ENCODE measurements at regions of chr20 and their contacts with region 1.

Region 1: GRCh38 chr20:64119681-64120341 is 12.4 kb upstream of the NPBWR2 start:
- DNase-seq: no peak
- H3K4me3 Mint-ChIP-seq: peak overlapping the region; percentile 77
- H3K27ac Mint-ChIP-seq: peak overlapping the region; percentile 80
- H3K4me1 Mint-ChIP-seq: peaks cover 9% of the 10 kb centered on the region
- H3K27me3 Mint-ChIP-seq: peaks cover 14% of the 10 kb centered on the region

Region 2: GRCh38 chr20:63903796-63904561 is 215.8 kb before region 1 on chr20:
- intact Hi-C with region 1: loop called (anchors 5 kb)
- DNase-seq: no peak
- H3K4me3 Mint-ChIP-seq: no peak overlapping the region
- H3K27ac Mint-ChIP-seq: peak overlapping the region; percentile 47
- H3K4me1 Mint-ChIP-seq: peaks cover 33% of the 10 kb centered on the region
- H3K27me3 Mint-ChIP-seq: no peaks in the 10 kb centered on the region

Region 3: GRCh38 chr20:64038565-64039292 is 81.1 kb before region 1 on chr20:
- intact Hi-C with region 1: loop called (anchors 1 kb)
- DNase-seq: peak; percentile 95
- H3K4me3 Mint-ChIP-seq: peak overlapping the region; percentile 79
- H3K27ac Mint-ChIP-seq: peak overlapping the region; percentile 80
- H3K4me1 Mint-ChIP-seq: peaks cover 48% of the 10 kb centered on the region
- H3K27me3 Mint-ChIP-seq: no peaks in the 10 kb centered on the region

Region 4: DNA sequence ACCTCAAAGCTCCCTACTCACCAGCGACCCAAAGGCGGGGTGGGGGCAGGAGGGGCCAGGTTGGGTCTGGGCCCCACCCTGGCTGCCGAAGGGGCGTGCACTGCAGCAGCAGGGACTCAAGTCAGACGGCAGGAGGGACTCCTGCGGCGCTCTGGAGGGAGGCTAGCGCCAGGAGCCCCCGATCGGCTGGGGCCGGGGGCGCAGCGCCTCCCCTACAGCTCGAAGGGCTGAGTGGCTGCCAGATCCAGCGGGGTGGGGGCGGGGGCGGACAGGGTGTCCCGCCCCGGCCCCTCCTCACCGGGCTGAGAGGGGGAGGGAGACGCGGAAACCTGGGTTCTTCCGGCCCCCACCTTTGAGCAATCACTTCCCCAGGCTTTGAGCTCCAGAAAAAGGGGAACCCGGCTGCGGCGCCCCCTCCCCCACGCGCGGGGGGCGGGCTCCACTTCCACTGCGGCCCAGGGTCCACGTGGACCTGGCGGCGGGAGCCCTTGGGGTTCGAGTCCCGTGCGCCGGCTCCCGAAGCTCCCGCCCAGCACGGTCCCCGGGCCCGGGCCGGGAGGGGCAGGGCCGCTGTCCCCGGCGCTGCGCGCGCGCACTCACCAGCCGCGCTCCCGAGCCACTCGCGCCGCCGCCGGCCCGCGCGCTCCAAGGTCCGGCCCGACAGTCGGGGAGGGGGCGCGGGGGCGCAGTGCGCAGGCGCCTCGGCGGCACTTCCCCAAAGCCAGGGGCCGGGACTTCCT is 40.4 kb before region 1 on chr20 and contains the start of gene RGS19:
- intact Hi-C with region 1: loop called (anchors 1 kb)
- DNase-seq: peak; percentile 93
- H3K4me3 Mint-ChIP-seq: peak within 1 kb of the TSS; percentile 95
- H3K27ac Mint-ChIP-seq: peak within 1 kb of the TSS; percentile 80
- H3K4me1 Mint-ChIP-seq: peaks cover 29% of the 10 kb centered on the region
- H3K27me3 Mint-ChIP-seq: peaks cover 13% of the 10 kb centered on the region
- total RNA-seq, gene RGS19: 50.0 TPM in 2 replicates